Stomach (tissue), 19 donors: ENCODE measurements at regions of chr9 and their contacts with region 1.

Region 1: DNA sequence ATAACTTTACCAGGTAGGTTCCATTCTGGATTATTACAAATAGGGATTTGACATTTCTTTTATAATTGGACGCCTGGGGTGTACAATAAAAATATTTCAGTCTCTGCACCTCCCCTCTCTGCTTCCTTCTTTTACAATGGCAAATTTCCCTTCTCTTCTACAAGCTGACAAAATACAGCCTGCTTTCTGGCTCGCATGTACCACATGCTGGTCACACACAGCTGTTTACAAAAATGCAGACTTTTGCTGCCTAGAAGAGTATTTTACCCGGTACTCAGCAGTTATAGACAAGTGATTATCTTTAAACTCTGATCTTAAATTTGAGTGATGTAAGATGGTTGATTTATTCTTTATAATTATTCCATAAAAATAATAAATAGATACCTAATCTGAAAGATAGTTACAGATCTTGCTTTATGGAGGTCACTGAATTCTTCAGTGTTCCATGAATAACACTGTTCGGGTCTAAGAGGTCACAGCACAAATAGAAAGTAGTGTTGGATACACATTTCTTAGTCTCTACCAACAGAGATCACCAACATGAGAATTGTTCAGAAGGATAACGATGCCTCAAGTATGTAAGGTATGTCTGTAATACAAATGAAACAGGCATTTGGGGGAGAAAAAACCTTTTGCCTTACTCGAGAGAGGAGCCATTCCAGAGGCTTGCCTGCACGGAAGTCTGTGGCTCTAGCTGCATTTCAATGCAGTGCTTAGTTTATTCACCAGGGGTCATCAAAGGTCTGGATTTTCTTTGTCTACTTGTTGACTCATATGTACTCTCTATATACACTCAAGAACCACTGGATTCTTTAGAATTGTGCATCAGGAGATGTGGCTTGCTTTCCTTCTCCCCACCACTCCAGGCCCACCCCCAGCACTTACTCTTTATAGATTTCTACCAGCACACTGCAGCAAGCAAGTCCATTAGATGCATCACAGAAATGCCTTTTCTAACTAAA is 206.6 kb upstream of the RFX3 start:
- DNase-seq: peak in 1 of 2 donors; percentile 92
- H3K4me3 ChIP-seq: no peak overlapping the region
- H3K27ac ChIP-seq: peak overlapping the region in 2 of 5 donors; percentile 40 to 41
- H3K4me1 ChIP-seq: peaks cover 0 to 11% (median 0%) of the 10 kb centered on the region in 4 donors
- H3K27me3 ChIP-seq: no peaks in the 10 kb centered on the region
- CTCF ChIP-seq: peak in 6 of 7 experiments; percentile 9 to 77 (median 58)
- EP300 ChIP-seq: no peak
- POLR2A ChIP-seq: no peak

Region 2: DNA sequence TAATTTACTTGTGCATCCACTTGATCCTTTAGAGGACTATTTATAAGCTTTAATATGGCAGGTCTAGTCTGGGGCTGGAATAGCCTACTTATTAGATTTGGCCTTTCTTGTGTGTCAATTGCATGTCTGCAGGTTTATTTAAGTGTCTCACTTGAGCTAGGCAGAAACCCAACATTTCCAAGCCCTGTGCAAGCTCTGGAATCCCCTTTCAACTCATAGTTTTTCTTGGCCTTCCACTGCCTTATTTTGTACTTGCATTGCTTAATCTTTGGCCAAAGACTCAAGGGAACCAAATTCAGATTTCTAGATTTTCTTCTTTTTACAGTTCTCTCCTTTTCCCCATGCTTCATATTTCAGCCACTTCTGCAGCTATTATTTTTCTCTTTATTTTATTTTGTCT is 104.1 kb before region 1 on chr9:
- intact Hi-C with region 1: no loop called
- DNase-seq: no peak
- H3K4me3 ChIP-seq: no peak overlapping the region
- H3K27ac ChIP-seq: no peak overlapping the region
- H3K4me1 ChIP-seq: no peaks in the 10 kb centered on the region
- H3K27me3 ChIP-seq: no peaks in the 10 kb centered on the region
- CTCF ChIP-seq: no peak
- EP300 ChIP-seq: no peak
- POLR2A ChIP-seq: no peak

Region 3: GRCh38 chr9:3828250-3828908 is 96.0 kb after region 1 on chr9:
- intact Hi-C with region 1: no loop called
- DNase-seq: no peak
- H3K4me3 ChIP-seq: no peak overlapping the region
- H3K27ac ChIP-seq: no peak overlapping the region
- H3K4me1 ChIP-seq: peaks cover 7 to 13% (median 11%) of the 10 kb centered on the region in 4 donors
- H3K27me3 ChIP-seq: no peaks in the 10 kb centered on the region
- CTCF ChIP-seq: no peak
- EP300 ChIP-seq: no peak
- POLR2A ChIP-seq: no peak

Region 4: GRCh38 chr9:4048441-4048840 is 316.1 kb after region 1 on chr9:
- intact Hi-C with region 1: no loop called
- DNase-seq: peak in 1 of 2 donors; percentile 34
- H3K4me3 ChIP-seq: no peak overlapping the region
- H3K27ac ChIP-seq: no peak overlapping the region
- H3K4me1 ChIP-seq: no peaks in the 10 kb centered on the region
- H3K27me3 ChIP-seq: no peaks in the 10 kb centered on the region
- CTCF ChIP-seq: peak in 1 of 7 experiments; percentile 12
- EP300 ChIP-seq: no peak
- POLR2A ChIP-seq: no peak

Region 5: GRCh38 chr9:4344946-4345345 is 612.6 kb after region 1 on chr9:
- intact Hi-C with region 1: loop called (anchors 10 kb)
- DNase-seq: no peak
- H3K4me3 ChIP-seq: no peak overlapping the region
- H3K27ac ChIP-seq: no peak overlapping the region
- H3K4me1 ChIP-seq: no peaks in the 10 kb centered on the region
- H3K27me3 ChIP-seq: no peaks in the 10 kb centered on the region
- CTCF ChIP-seq: no peak
- EP300 ChIP-seq: no peak
- POLR2A ChIP-seq: no peak